Panc1 (cell line): ENCODE measurements at regions of chr18 and their contacts with region 1.

Region 1: DNA sequence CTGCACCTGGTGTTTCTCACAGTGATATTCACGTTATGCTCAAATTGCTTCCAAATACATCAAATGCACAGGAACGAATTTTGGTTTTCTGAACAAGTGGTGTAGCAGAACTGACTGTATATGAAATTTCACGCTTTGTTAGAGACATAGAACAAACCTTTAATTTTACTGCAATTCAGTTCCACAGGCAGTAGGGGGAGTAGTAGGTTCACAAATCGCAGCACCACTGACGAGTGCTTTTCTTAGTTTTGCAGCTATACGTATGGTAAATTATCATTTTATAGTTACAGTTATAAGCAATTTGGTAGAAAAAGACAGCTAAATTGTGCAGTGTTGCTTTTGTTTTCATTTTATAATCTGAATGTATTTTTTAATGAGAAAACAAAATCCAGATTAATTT is 113.3 kb downstream of the KIAA1328 start:
- DNase-seq: peak; percentile 10
- ATAC-seq: no peak
- H3K4me3 ChIP-seq: no peak overlapping the region
- H3K27ac ChIP-seq: no peak overlapping the region
- H3K4me1 ChIP-seq: no peaks in the 10 kb centered on the region
- H3K27me3 ChIP-seq: no peaks in the 10 kb centered on the region
- CTCF ChIP-seq: peak; percentile 71; the same call in 1 of the 2 replicates

Region 2: GRCh38 chr18:36697905-36698304 is 244.4 kb before region 1 on chr18:
- CTCF ChIA-PET with region 1: no interaction called
- POLR2A ChIA-PET with region 1: no interaction called
- in situ Hi-C with region 1: no loop called
- intact Hi-C with region 1: no loop called
- DNase-seq: peak; percentile 2
- ATAC-seq: no peak
- H3K4me3 ChIP-seq: no peak overlapping the region
- H3K27ac ChIP-seq: no peak overlapping the region
- H3K4me1 ChIP-seq: no peaks in the 10 kb centered on the region
- H3K27me3 ChIP-seq: no peaks in the 10 kb centered on the region
- CTCF ChIP-seq: no peak

Region 3: GRCh38 chr18:37335409-37335736 is 393.1 kb after region 1 on chr18:
- CTCF ChIA-PET with region 1: no interaction called
- POLR2A ChIA-PET with region 1: no interaction called
- in situ Hi-C with region 1: no loop called
- intact Hi-C with region 1: loop called (anchors 10 kb)
- DNase-seq: no peak
- ATAC-seq: peak; percentile 59; the same call in 1 of the 2 replicates
- H3K4me3 ChIP-seq: no peak overlapping the region
- H3K27ac ChIP-seq: no peak overlapping the region
- H3K4me1 ChIP-seq: no peaks in the 10 kb centered on the region
- H3K27me3 ChIP-seq: no peaks in the 10 kb centered on the region
- CTCF ChIP-seq: no peak; the same call in 1 of the 2 replicates